ENCODE measurements at regions of chr14 and their contacts with region 1.

Region 1: GRCh38 chr14:30443368-30444007 is 115.5 kb upstream of the G2E3 start:
- DNase-seq: peak in 1 of 4 donors; percentile 30
- ATAC-seq: no peak
- H3K4me3 ChIP-seq: no peak overlapping the region
- H3K27ac ChIP-seq: no peak overlapping the region
- H3K4me1 ChIP-seq: peaks cover 4% of the 10 kb centered on the region
- H3K27me3 ChIP-seq: no peaks in the 10 kb centered on the region
- CTCF ChIP-seq: peak; percentile 12 to 80 (median 68)
- POLR2A ChIP-seq: no peak

Region 2: DNA sequence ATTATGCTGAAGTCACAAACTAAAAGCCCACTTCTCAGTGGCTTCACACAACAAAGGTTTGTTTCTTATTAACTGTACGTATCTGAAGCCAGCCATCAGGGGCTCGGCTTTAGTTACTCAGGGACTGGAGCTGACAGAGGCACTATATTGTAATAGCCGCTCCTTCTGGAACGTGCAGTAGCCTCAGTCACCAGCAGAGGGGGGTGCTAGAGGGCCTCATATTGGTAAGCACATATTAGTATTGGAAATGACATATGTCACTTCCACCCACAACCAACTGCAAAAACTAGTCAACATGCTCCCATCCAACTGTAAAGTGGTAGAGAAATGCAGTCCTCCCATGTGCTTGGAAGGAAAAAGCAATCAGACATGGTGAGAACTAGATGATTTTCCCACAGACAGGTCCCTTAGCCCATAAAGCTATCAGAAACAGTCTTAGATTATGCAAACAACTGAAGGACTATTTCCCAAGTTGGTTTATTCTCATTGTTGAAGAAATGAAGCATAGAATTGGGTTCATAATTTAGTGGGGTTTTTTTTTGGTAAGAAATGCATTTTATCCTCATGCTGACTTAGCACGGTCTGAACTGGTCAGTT is 68.1 kb before region 1 on chr14:
- intact Hi-C with region 1: loop called (anchors 5 kb)
- DNase-seq: peak; percentile 72 to 84 (median 80)
- ATAC-seq: peak; percentile 92
- H3K4me3 ChIP-seq: no peak overlapping the region
- H3K27ac ChIP-seq: no peak overlapping the region
- H3K4me1 ChIP-seq: no peaks in the 10 kb centered on the region
- H3K27me3 ChIP-seq: no peaks in the 10 kb centered on the region
- CTCF ChIP-seq: peak; percentile 74 to 84 (median 78)
- POLR2A ChIP-seq: no peak